ENCODE measurements at regions of chr6 and their contacts with region 1.

Region 1: GRCh38 chr6:145749632-145750031 is 14.3 kb upstream of the EPM2A start:
- H3K4me3 Mint-ChIP-seq: no peak overlapping the region
- H3K27ac Mint-ChIP-seq: no peak overlapping the region
- H3K4me1 Mint-ChIP-seq: peaks cover 8% of the 10 kb centered on the region
- H3K27me3 Mint-ChIP-seq: no peaks in the 10 kb centered on the region

Region 2: DNA sequence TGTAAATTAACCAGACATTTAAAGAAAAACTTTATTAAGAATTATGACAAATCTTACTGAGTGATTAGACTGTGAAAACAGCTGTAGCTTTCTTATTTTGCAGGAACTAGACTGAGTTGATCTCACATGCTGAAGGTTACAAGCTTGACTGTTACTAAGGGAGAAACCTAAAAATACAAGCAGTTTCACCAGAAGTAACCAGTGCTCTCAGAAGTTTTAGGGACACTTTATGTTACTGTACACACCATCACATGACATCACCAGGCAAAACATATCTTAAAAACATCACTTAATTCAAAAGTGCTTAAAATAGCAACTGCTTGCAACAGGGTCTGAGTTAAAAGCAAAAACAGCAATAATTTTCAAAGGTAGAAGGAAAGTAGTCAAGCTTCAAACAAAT is 59.6 kb after region 1 on chr6:
- intact Hi-C with region 1: loop called (anchors 10 kb)
- H3K4me3 Mint-ChIP-seq: no peak overlapping the region
- H3K27ac Mint-ChIP-seq: no peak overlapping the region
- H3K4me1 Mint-ChIP-seq: peaks cover 34% of the 10 kb centered on the region
- H3K27me3 Mint-ChIP-seq: no peaks in the 10 kb centered on the region

Measured in dendritic cell treated with granulocyte-macrophage colony-stimulating factor and Interleukin-4, amounts not matched to agents 40 ng/mL and 50 ng/mL, for 4 days (primary cell).